Spleen (tissue), 13 donors: ENCODE measurements at regions of chr17 and their contacts with region 1.

Region 1: GRCh38 chr17:40355123-40355803 is 9.3 kb downstream of the GJD3 start:
- DNase-seq: peak; percentile 95
- H3K4me3 ChIP-seq: no peak overlapping the region
- H3K27ac ChIP-seq: peak overlapping the region in 5 of 8 donors; percentile 37 to 97 (median 49)
- H3K4me1 ChIP-seq: peaks cover 17 to 91% (median 66%) of the 10 kb centered on the region in 6 donors
- H3K27me3 ChIP-seq: peaks cover 0 to 3% (median 0%) of the 10 kb centered on the region in 7 donors
- CTCF ChIP-seq: peak; percentile 95 to 98 (median 98)
- POLR2A ChIP-seq: no peak

Region 2: GRCh38 chr17:40303009-40303657 is 52.1 kb before region 1 on chr17:
- intact Hi-C with region 1: loop called (anchors 2 kb)
- DNase-seq: no peak
- H3K4me3 ChIP-seq: no peak overlapping the region
- H3K27ac ChIP-seq: peak overlapping the region in 3 of 8 donors; percentile 33 to 58 (median 50)
- H3K4me1 ChIP-seq: peaks cover 24 to 54% (median 39%) of the 10 kb centered on the region in 6 donors
- H3K27me3 ChIP-seq: no peaks in the 10 kb centered on the region
- CTCF ChIP-seq: peak; percentile 62 to 93 (median 84)
- POLR2A ChIP-seq: no peak